ENCODE measurements at regions of chr19 and their contacts with region 1.

Region 1: DNA sequence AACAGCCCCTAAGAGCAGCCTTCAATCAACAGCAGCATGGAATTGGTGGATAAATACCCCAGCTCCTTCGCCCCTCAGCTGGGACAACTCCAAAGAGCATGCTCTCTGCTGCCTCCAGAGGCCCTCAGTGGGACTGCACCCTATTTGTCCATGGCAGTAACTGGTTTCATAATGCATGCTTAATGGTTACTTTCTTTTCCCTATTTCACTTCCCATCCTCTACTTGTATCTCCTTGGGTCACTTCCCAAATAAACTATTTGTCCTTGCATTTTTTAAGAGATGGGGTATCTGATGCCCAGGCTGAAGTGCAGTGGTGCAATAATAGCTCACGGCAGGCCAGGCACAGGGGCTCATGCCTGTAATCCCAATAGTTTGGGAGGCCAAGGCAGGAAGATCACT is 13.5 kb upstream of the TPM4 start:
- DNase-seq: peak; percentile 59 to 61
- H3K4me3 ChIP-seq: no peak overlapping the region
- H3K27ac ChIP-seq: no peak overlapping the region
- H3K4me1 ChIP-seq: peaks cover 11% of the 10 kb centered on the region
- H3K27me3 ChIP-seq: no peaks in the 10 kb centered on the region
- CTCF ChIP-seq: peak; percentile 99

Region 2: GRCh38 chr19:16018801-16019551 is 43.8 kb before region 1 on chr19:
- CTCF ChIA-PET with region 1: no interaction called
- POLR2A ChIA-PET with region 1: no interaction called
- intact Hi-C with region 1: no loop called
- DNase-seq: no peak
- H3K4me3 ChIP-seq: no peak overlapping the region
- H3K27ac ChIP-seq: no peak overlapping the region
- H3K4me1 ChIP-seq: no peaks in the 10 kb centered on the region
- H3K27me3 ChIP-seq: no peaks in the 10 kb centered on the region
- CTCF ChIP-seq: no peak

Region 3: DNA sequence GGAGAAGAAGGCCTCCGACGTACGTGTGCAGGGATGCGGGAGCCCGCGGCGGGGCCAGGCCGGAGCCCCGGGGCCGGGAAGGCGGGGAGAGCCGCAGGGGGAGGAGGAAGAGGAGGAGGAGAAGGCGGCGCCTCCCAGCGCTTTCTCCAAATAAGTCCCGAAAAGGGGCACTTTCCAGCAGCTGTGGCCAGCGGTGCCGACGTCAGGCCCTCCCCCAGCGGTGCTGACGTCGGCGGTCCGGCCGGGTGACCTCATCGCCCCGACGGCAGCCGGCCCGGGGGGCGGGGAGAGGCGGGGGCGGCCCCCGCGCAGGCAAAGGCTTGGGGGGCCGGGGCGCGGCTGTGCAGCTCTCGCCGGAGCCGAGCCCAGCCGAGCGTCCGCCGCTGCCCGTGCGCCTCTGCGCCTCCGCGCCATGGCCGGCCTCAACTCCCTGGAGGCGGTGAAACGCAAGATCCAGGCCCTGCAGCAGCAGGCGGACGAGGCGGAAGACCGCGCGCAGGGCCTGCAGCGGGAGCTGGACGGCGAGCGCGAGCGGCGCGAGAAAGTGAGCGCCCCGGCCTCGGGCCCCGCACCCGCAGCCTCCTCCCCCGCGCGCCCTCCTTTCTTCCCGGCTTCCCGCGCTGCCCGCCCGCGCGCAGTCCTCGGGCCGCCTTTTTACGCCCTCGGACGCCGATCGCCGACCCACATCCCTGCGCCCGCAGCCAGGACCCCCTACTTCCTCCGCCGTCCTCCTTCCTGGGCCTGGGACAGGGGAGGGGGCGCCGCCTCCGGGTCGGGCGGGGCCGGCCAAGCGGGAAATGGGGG is 13.6 kb after region 1 on chr19 and contains the start of gene TPM4:
- CTCF ChIA-PET with region 1: no interaction called
- POLR2A ChIA-PET with region 1: interaction called, 15 read pairs
- intact Hi-C with region 1: no loop called
- DNase-seq: peak; percentile 77 to 92
- H3K4me3 ChIP-seq: peak within 1 kb of the TSS; percentile 70
- H3K27ac ChIP-seq: peak within 1 kb of the TSS; percentile 99
- H3K4me1 ChIP-seq: peaks cover 43% of the 10 kb centered on the region
- H3K27me3 ChIP-seq: no peaks in the 10 kb centered on the region
- CTCF ChIP-seq: no peak
- total RNA-seq, gene TPM4: 279 and 307 TPM in 2 replicates